ENCODE measurements at regions of chr19 and their contacts with region 1.

Region 1: DNA sequence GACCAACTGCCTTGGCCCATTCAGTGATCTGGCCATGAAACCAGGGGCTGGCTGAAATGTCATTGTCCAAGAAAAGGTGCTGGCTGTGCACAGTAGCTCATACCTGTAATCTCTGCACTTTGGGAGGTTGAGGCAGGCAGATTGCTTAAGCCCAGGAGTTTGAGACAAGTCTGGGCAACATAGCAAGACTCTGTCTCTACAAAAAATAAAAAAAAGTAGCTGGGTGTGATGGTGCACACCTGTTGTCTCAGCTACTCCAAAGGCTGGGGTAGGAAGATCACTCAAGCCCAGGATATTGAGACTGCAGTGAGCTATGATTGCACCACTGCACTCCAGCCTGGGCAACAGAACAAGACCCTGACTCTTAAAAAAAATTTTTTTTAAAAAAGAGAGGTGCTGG is 28.6 kb upstream of the C19orf12 start:
- DNase-seq: no peak
- ATAC-seq: no peak
- H3K4me3 Mint-ChIP-seq: no peak overlapping the region
- H3K27ac Mint-ChIP-seq: no peak overlapping the region
- H3K4me1 Mint-ChIP-seq: no peaks in the 10 kb centered on the region
- H3K27me3 Mint-ChIP-seq: no peaks in the 10 kb centered on the region

Region 2: GRCh38 chr19:29665215-29665825 is 78.4 kb before region 1 on chr19 and contains the start of gene PLEKHF1:
- CTCF ChIA-PET with region 1: no interaction called
- DNase-seq: peak; percentile 91
- ATAC-seq: peak; percentile 86
- H3K4me3 Mint-ChIP-seq: peak within 1 kb of the TSS; percentile 85
- H3K27ac Mint-ChIP-seq: peak within 1 kb of the TSS; percentile 90
- H3K4me1 Mint-ChIP-seq: peaks cover 63% of the 10 kb centered on the region
- H3K27me3 Mint-ChIP-seq: no peaks in the 10 kb centered on the region
- total RNA-seq, gene PLEKHF1: 42.4 to 64.1 TPM

Region 3: GRCh38 chr19:29704562-29705558 is 38.8 kb before region 1 on chr19:
- CTCF ChIA-PET with region 1: no interaction called
- DNase-seq: no peak
- ATAC-seq: peak; percentile 85
- H3K4me3 Mint-ChIP-seq: no peak overlapping the region
- H3K27ac Mint-ChIP-seq: peak overlapping the region; percentile 88
- H3K4me1 Mint-ChIP-seq: peaks cover 52% of the 10 kb centered on the region
- H3K27me3 Mint-ChIP-seq: no peaks in the 10 kb centered on the region

Region 4: GRCh38 chr19:29731331-29731850 is 12.3 kb before region 1 on chr19:
- CTCF ChIA-PET with region 1: interaction called, 10 read pairs
- DNase-seq: no peak
- ATAC-seq: no peak
- H3K4me3 Mint-ChIP-seq: no peak overlapping the region
- H3K27ac Mint-ChIP-seq: no peak overlapping the region
- H3K4me1 Mint-ChIP-seq: no peaks in the 10 kb centered on the region
- H3K27me3 Mint-ChIP-seq: peaks cover 38% of the 10 kb centered on the region

Region 5: DNA sequence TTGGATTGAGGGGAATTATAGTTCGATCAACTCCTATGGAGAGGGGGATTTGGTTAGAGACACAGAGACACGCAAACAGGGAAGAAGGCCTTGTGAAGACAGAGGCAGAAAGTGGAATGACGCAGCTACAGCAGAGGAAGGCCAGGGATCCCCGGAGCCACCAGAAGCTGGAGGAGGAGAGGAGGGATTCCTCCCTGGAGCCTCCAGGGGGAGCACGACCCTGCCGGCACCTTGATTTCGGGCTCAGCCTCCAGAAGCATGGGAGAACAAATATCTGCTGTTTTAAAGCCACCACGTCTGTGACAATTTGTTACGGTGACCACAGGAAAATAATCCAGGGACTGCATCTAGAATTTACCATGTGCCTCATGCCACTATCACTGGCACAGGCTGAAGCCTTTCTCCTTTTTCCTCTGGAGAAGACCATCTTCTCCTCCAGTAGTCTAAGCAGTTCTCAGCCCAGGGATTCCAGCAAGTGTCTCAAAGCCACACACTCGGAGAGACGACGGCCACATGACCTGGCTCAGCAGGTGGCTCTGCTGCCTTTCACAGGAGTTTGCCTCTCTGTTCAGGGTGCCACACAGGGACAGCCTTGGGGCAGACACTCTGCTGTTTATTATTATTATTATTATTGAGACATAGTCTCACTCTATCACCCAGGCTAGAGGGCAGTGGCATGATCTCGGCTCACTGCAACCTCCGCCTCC is 28.2 kb after region 1 on chr19:
- CTCF ChIA-PET with region 1: no interaction called
- DNase-seq: no peak
- ATAC-seq: no peak
- H3K4me3 Mint-ChIP-seq: no peak overlapping the region
- H3K27ac Mint-ChIP-seq: no peak overlapping the region
- H3K4me1 Mint-ChIP-seq: peaks cover 12% of the 10 kb centered on the region
- H3K27me3 Mint-ChIP-seq: peaks cover 12% of the 10 kb centered on the region

Measured in activated CD8-positive, alpha-beta memory T cell treated with anti-CD3 and anti-CD28 coated beads, Interleukin-2, amount 10 ng/mL, durations not matched to agents 7 days and 5 days (primary cell).